G401 (cell line): ENCODE measurements at regions of chr1 and their contacts with region 1.

Region 1: DNA sequence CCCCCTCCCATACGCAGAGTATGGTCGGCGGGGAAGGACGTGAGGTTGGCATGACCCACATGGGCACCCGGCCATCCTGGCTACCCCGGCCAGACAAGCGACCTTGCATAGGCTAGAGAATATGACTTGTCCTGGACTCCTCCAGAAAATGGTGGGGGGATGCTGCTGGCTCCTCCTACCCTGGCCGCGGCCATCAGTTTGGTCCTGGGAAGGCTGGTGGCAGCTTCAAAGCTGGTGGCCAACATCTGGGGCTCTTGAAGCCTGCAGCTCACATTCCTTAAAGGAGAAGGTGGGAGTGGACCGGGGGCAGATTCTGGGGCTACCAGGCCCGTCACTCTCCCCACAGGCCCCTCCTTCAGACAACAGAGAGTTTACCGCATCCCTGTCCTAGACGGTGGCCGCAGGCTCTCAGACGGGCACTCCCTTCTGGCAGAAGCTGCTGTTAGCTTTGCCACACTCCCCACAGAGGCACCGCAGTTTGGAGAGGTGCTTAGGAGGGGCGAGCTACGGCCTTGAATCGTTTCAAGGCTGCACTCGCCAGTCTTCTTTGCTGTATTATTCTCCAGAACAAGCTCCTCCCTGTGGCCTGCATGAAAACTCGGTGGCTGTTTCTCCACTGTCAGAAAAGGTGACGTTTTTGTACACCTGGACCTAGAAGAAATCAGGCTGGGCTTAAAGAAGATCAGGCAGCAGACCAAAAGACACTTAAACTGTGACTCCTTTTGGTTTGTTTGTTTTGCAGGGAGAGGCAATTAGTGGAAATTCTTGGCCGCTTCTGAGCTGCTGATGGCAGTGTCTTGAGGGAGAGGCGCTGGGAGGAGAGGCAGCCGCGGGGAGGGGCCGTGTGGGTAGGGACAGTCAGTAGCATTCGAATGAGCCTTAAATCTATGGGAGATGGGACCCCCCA is 68.0 kb downstream of the RUNX3 start:
- DNase-seq: no peak

Region 2: GRCh38 chr1:24929398-24930114 is 67.5 kb after region 1 on chr1:
- in situ Hi-C with region 1: loop called (anchors 5 kb)
- DNase-seq: no peak